Endothelial cell of umbilical vein (primary cell): ENCODE measurements at regions of chr1 and their contacts with region 1.

Region 1: DNA sequence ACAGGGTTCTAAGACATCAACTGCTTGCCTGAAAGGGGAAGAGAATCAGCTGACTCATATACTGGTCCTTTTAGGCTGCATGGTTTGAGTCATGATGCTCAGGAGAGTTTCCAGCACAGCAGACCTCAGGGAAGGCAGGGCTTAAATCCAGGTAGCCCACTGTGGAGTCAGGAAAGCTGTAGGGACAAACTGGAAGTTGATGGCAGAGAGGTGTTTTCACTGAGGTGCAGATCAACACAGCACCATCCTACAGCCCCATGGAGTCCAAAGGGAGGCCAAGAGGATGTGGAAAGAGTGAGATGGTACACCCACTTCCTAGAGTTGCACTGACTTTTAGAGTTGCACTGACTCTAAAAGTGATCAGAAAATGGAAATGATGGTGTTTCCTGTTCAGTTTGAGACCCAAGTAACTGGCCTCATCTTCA is 252.4 kb upstream of the DUSP10 start:
- DNase-seq: no peak
- H3K4me3 ChIP-seq: no peak overlapping the region
- H3K27ac ChIP-seq: no peak overlapping the region
- H3K4me1 ChIP-seq: no peaks in the 10 kb centered on the region
- H3K27me3 ChIP-seq: no peaks in the 10 kb centered on the region
- CTCF ChIP-seq: no peak
- POLR2A ChIP-seq: no peak

Region 2: DNA sequence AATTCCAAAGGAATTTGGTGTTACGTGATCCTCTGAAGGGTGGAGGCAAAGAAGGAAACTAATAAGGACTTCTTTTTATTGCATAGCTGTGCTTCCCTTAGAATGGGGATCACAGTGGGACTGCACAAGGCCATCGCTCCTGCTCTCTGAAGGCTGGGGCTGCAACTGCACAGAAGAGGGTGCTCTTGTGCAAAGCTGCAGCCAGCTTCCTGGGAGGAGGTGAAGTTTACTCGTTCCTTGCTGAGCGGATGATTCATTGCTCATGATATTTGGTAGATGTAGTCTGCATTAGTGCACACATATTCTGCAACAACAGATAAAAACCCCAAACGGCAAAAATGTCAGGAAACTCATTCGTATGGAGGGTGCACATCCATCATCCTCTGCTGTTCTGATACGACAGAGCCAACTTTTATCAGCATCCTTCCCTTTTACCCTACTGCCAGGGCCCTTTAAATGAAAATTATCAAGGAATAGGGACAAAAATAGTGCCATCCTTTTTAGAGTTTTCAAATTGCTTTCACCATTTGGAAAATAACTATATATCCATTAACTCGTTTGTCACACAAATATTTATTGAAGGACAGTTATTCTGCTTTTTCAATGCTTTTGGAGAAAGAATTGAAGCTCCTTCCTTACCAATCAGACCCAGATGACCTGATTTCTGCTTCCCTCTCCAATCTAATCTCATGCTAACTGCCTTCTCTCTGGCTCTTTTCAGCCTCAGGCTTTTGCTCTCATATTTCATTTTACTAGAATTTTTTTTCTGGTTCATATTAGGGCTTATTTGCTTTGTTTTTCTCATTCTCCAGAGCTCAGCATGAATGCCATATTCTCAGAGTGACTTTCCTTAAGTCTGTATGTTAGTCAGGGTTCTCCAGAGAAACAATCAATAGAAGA is 516.0 kb before region 1 on chr1:
- CTCF ChIA-PET with region 1: interaction called, 9 read pairs
- POLR2A ChIA-PET with region 1: no interaction called
- dilution Hi-C with region 1: no loop called
- intact Hi-C with region 1: loop called (anchors 10 kb)
- DNase-seq: peak; percentile 17
- H3K4me3 ChIP-seq: no peak overlapping the region
- H3K27ac ChIP-seq: no peak overlapping the region
- H3K4me1 ChIP-seq: no peaks in the 10 kb centered on the region
- H3K27me3 ChIP-seq: peaks cover 0 to 3% of the 10 kb centered on the region in 2 experiments
- CTCF ChIP-seq: peak in 1 of 2 donors; percentile 12
- POLR2A ChIP-seq: no peak

Region 3: DNA sequence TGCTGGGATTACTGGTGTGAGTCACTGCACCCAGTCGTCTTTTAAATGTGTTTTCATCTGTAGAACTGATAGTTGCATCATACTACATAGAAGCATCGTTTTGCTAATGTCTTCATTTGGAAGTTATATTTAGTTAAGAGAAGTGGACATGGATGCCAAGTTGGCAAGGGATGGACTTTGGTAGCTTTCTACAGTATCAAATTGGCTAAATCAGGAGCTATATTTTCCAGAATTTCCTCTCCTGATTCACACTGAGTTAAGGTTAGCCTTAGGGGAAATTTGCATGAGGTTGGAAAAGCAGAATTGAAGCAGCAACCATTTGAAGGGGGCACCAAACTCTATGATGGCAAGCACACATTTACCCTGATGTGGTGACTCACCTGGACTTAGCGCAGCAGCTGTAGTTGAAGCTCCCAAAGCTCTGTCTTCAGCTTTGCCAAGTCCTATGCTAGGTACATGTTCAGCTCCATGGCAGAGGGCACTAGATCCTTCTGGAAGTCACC is 296.3 kb before region 1 on chr1:
- CTCF ChIA-PET with region 1: no interaction called
- POLR2A ChIA-PET with region 1: no interaction called
- dilution Hi-C with region 1: no loop called
- intact Hi-C with region 1: no loop called
- DNase-seq: no peak
- H3K4me3 ChIP-seq: no peak overlapping the region
- H3K27ac ChIP-seq: no peak overlapping the region
- H3K4me1 ChIP-seq: no peaks in the 10 kb centered on the region
- H3K27me3 ChIP-seq: no peaks in the 10 kb centered on the region
- CTCF ChIP-seq: no peak
- POLR2A ChIP-seq: no peak

Region 4: GRCh38 chr1:221958156-221958562 is 36.1 kb before region 1 on chr1:
- CTCF ChIA-PET with region 1: no interaction called
- POLR2A ChIA-PET with region 1: no interaction called
- dilution Hi-C with region 1: no loop called
- intact Hi-C with region 1: no loop called
- DNase-seq: no peak
- H3K4me3 ChIP-seq: no peak overlapping the region
- H3K27ac ChIP-seq: no peak overlapping the region
- H3K4me1 ChIP-seq: no peaks in the 10 kb centered on the region
- H3K27me3 ChIP-seq: no peaks in the 10 kb centered on the region
- CTCF ChIP-seq: no peak
- POLR2A ChIP-seq: no peak